ENCODE measurements at regions of chr20 and their contacts with region 1.

Region 1: GRCh38 chr20:5788385-5788895 is 38.2 kb downstream of the SHLD1 start:
- DNase-seq: peak; percentile 22
- H3K4me3 ChIP-seq: no peak overlapping the region
- H3K27me3 ChIP-seq: no peaks in the 10 kb centered on the region
- CTCF ChIP-seq: peak; percentile 81

Region 2: DNA sequence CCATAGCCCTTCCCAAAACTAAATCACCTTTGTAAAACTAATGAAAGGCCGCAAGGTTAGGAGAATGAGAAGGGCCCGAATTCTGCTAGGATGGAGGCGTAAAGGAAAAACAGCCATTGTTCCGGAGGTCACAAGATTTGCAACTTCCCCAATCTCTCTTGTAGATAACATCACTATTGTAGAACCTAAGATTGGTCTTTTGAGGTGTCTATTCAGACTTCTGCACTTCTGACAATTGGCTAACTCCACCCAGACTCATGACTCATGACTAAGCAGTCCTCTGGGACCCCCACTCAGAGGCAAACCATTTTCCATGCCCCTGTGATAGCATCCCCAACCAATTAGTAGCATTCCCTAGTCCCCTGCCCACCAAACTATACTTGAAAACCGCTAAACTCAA is 248.7 kb before region 1 on chr20:
- CTCF ChIA-PET with region 1: interaction called, 148 read pairs
- POLR2A ChIA-PET with region 1: no interaction called
- DNase-seq: no peak
- H3K4me3 ChIP-seq: no peak overlapping the region
- H3K27me3 ChIP-seq: no peaks in the 10 kb centered on the region
- CTCF ChIP-seq: no peak

Region 3: GRCh38 chr20:5550733-5551529 is 237.5 kb before region 1 on chr20:
- CTCF ChIA-PET with region 1: interaction called, 31 read pairs
- POLR2A ChIA-PET with region 1: no interaction called
- DNase-seq: no peak
- H3K4me3 ChIP-seq: no peak overlapping the region
- H3K27me3 ChIP-seq: no peaks in the 10 kb centered on the region
- CTCF ChIP-seq: no peak

Region 4: GRCh38 chr20:5557123-5557522 is 231.3 kb before region 1 on chr20:
- CTCF ChIA-PET with region 1: interaction called, 72 read pairs
- POLR2A ChIA-PET with region 1: no interaction called
- DNase-seq: no peak
- H3K4me3 ChIP-seq: no peak overlapping the region
- H3K27me3 ChIP-seq: no peaks in the 10 kb centered on the region
- CTCF ChIP-seq: peak; percentile 69

Region 5: GRCh38 chr20:5569021-5569420 is 219.4 kb before region 1 on chr20:
- CTCF ChIA-PET with region 1: interaction called, 83 read pairs
- POLR2A ChIA-PET with region 1: no interaction called
- DNase-seq: no peak
- H3K4me3 ChIP-seq: no peak overlapping the region
- H3K27me3 ChIP-seq: no peaks in the 10 kb centered on the region
- CTCF ChIP-seq: peak; percentile 44

Region 6: DNA sequence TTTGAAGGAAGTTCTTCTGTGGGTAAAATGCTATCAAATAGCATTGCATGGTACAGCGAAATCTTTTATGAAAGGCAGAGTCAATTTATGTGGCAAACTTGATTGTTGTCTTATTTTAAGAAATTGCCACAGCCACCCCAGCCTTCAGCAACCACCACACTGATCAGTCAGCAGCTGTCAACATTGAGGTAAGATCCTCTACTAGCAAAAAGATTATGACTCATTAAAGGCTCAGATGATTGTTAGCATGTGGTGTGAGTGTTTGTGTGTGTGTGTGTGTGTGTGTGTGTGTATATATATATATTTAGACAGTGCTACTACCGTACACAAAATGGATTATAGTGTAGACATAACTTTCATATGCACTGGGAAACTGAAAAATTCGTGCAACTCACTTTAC is 237.6 kb after region 1 on chr20:
- CTCF ChIA-PET with region 1: no interaction called
- POLR2A ChIA-PET with region 1: no interaction called
- DNase-seq: no peak
- H3K4me3 ChIP-seq: no peak overlapping the region
- H3K27me3 ChIP-seq: no peaks in the 10 kb centered on the region
- CTCF ChIP-seq: no peak

Measured in BJ (cell line).